Mammary epithelial cell (primary cell): ENCODE measurements at regions of chr3 and their contacts with region 1.

Region 1: DNA sequence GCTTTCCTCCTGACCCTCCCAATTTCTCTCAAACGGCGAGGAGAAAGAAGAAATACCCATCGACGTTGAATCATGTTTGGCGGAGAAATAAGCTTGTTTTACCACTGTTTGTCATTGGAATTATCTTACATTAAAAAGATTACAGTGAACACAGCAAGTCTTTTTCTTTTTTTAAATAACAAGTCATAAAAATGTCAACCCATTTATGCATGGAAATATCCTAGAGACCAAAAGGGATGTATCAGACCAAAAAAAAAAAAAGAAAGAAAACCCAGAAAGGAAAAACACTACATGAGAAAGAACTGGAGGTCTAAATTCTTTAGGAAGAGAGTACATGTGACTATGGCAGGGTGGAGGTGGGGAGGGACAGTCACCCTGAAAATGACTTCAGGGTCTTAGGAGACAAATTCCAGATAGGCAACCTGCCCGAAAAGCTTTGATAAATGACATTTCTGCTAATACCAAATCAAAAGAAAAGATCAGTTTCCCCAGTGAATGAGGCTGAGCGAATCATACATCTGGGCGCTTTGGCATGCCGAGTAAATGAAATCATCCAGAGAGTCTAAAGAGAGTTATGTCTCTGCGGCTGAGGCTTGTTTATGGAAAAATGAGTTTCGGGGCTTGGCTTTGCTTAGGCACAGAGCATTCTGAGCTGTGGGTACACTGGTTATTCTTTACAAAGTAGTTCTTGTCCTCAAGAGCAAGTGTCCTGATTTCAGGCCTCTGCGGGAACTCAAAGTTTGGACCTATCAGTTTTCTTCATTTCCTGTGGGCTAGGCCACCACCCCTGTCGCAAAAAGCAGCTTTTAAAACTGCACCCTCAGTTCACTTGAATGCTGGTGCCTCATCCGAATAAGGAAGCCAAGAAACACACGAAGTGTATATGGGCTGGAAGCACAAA is 110.1 kb upstream of the TGFBR2 start:
- DNase-seq: peak; percentile 61
- H3K4me3 ChIP-seq: no peak overlapping the region
- H3K27ac ChIP-seq: no peak overlapping the region
- H3K4me1 ChIP-seq: peaks cover 29% of the 10 kb centered on the region
- H3K27me3 ChIP-seq: no peaks in the 10 kb centered on the region
- CTCF ChIP-seq: no peak

Region 2: DNA sequence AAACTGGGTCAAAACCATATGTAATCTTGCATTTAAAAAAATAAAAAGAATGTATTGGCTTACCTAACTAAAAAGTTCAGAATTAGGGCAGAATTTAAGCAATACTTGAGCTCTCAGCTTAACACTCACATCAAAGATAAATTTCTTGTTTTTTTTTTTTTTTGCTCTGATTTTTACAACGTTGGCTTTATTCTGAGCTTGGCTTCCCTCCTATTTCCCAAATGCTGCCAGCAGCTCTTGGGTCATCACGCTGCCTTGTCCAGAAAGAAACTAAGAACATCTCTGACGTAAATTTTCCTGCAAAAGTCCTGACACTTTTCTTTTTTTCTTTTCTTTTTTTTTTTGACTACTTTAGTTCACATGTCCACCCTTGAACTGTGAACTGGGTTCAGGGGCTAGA is 40.5 kb before region 1 on chr3:
- CTCF ChIA-PET with region 1: no interaction called
- dilution Hi-C with region 1: loop called (anchors 5 kb)
- in situ Hi-C with region 1: no loop called
- intact Hi-C with region 1: no loop called
- DNase-seq: no peak
- H3K4me3 ChIP-seq: no peak overlapping the region
- H3K27ac ChIP-seq: no peak overlapping the region
- H3K4me1 ChIP-seq: no peaks in the 10 kb centered on the region
- H3K27me3 ChIP-seq: no peaks in the 10 kb centered on the region
- CTCF ChIP-seq: no peak